Gastrocnemius medialis (tissue), 4 donors: ENCODE measurements at regions of chr19 and their contacts with region 1.

Region 1: GRCh38 chr19:47019431-47020041 is at the start of gene NPAS1:
- DNase-seq: no peak
- ATAC-seq: no peak
- H3K4me3 ChIP-seq: peak within 1 kb of the TSS in 2 of 4 donors; percentile 7 to 33
- H3K27ac ChIP-seq: no peak within 1 kb of the TSS
- H3K4me1 ChIP-seq: peaks cover 9 to 18% of the 10 kb centered on the region in 2 donors
- H3K27me3 ChIP-seq: peaks cover 45 to 51% (median 51%) of the 10 kb centered on the region in 3 donors
- CTCF ChIP-seq: no peak
- POLR2A ChIP-seq: no peak
- total RNA-seq, gene NPAS1: 0.61 to 1.1 TPM in 2 of 4 donors, not detected in the others

Region 2: DNA sequence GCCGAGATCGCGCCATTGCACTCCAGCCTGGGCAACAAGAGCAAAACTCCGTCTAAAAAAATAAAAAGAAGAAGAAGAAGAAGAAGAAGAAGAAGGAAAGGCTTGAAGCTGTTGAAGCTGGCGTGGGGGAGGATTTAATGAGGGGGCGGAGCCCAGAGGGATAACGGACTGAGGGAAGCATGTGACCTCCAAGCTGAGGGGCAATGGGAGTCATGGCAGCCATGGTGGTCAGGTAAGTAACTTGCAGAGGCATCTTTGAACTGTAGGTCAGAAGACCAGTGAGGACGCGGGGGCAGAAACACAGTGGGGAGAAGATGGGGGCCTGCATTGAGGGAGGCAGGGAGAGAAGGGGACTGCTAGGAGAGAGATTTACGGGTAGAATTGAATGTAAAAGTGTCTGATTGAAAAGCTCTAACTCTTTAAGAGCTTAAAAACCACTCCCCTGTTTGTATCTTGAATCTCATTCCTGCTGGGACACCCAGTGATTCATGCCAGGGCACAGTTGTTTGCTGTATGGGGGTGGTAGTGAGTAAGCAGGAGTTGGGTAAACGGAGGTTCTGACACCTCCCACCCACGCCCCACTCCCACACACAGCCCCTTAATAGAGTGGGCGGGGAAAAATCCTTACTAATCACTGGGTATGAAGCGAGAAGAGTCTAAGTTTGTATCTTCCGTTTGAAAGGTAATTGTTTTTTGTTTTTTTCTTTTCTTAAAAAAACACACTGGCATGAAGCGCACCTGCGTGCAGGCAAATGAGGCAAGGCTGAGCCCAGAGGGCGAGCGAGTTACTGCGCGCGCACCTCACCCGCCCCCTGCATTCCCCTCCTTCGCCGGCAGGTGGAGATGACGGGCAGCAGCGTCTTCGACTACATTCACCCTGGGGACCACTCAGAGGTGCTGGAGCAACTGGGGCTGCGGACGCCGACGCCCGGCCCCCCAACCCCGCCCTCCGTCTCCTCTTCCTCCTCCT is 15.9 kb after region 1 on chr19:
- in situ Hi-C with region 1: no loop called
- intact Hi-C with region 1: loop called (anchors 2 kb)
- DNase-seq: peak; percentile 56 to 69
- ATAC-seq: peak; percentile 94 to 95
- H3K4me3 ChIP-seq: peak overlapping the region; percentile 51 to 77 (median 58)
- H3K27ac ChIP-seq: peak overlapping the region in 1 of 4 donors; percentile 11
- H3K4me1 ChIP-seq: peaks cover 5 to 12% of the 10 kb centered on the region in 2 donors
- H3K27me3 ChIP-seq: peaks cover 9 to 12% (median 10%) of the 10 kb centered on the region in 3 donors
- CTCF ChIP-seq: peak; percentile 91 to 99 (median 96)
- POLR2A ChIP-seq: no peak

Region 3: GRCh38 chr19:47190167-47190727 is 170.7 kb after region 1 on chr19:
- in situ Hi-C with region 1: no loop called
- intact Hi-C with region 1: no loop called
- DNase-seq: peak; percentile 7 to 34
- ATAC-seq: peak; percentile 42 to 60
- H3K4me3 ChIP-seq: peak overlapping the region in 2 of 4 donors; percentile 10 to 11
- H3K27ac ChIP-seq: peak overlapping the region; percentile 27 to 69 (median 37)
- H3K4me1 ChIP-seq: peaks cover 9 to 11% of the 10 kb centered on the region in 2 donors
- H3K27me3 ChIP-seq: no peaks in the 10 kb centered on the region
- CTCF ChIP-seq: no peak
- POLR2A ChIP-seq: no peak